ENCODE measurements at regions of chr17 and their contacts with region 1.

Region 1: GRCh38 chr17:68771867-68772515 is 170.8 kb upstream of the FAM20A start:
- DNase-seq: no peak
- H3K4me3 ChIP-seq: no peak overlapping the region
- H3K27ac ChIP-seq: no peak overlapping the region
- H3K4me1 ChIP-seq: no peaks in the 10 kb centered on the region
- H3K27me3 ChIP-seq: no peaks in the 10 kb centered on the region
- CTCF ChIP-seq: peak in 2 of 3 experiments; percentile 57 to 70; a peak in 2 of 4 replicates
- EP300 ChIP-seq: no peak
- POLR2A ChIP-seq: no peak
- RAD21 ChIP-seq: peak; percentile 69 to 79

Region 2: DNA sequence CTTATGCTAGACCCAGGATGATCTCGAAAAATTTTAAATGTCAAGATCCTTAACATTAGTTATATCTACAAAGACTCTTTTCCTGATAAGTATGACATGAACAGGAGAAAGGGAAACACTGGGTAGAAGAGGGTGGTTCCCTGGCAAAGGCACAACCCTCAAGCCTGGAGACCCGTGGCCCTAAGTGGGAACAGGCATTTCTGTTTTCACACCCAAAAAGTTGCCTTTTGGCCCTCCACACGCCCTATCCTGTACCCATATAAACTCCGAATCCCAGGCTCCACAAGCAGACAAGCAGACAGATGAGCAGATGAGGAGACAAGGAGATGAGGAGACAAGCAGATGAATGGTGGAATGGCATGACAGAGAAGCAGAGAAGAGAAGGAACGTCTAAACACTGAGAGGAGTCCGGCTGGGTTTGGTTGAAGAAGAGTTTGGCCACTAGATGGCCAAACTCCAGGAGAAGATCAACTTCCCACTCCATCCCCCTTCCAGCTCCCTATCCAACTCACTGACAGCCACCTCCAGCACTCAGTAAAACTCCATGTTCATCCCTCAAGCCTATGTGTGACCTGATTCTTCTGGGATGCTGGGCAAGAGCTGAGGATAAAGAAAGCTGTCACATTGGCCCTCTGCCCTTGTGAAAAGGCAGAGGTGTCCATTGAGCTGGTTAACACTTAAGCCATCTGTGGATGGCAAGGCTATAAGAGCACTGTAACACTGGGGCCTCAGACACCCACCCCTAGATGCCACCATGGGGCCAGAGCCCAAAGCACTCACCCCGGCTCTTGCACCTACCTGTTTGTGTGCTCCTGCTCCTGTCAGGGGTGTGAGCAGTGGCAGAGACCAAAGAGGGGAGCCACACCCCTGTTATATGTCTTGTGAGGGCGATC is 31.2 kb before region 1 on chr17:
- CTCF ChIA-PET with region 1: no interaction called
- POLR2A ChIA-PET with region 1: no interaction called
- DNase-seq: no peak
- H3K4me3 ChIP-seq: no peak overlapping the region
- H3K27ac ChIP-seq: no peak overlapping the region
- H3K4me1 ChIP-seq: peaks cover 2 to 6% (median 4%) of the 10 kb centered on the region in 4 experiments; a peak in 2 of 7 replicates
- H3K27me3 ChIP-seq: no peaks in the 10 kb centered on the region
- CTCF ChIP-seq: peak in 1 of 3 experiments; percentile 23; a peak in 1 of 4 replicates
- EP300 ChIP-seq: no peak
- POLR2A ChIP-seq: no peak
- RAD21 ChIP-seq: no peak

Region 3: GRCh38 chr17:68759343-68760132 is 12.5 kb before region 1 on chr17:
- CTCF ChIA-PET with region 1: interaction called, 14 read pairs
- POLR2A ChIA-PET with region 1: no interaction called
- DNase-seq: peak; percentile 84 to 85
- H3K4me3 ChIP-seq: peak overlapping the region in 1 of 4 experiments; percentile 34; a peak in 1 of 8 replicates
- H3K27ac ChIP-seq: peak overlapping the region; percentile 82
- H3K4me1 ChIP-seq: peaks cover 2 to 7% (median 5%) of the 10 kb centered on the region in 4 experiments; a peak in 5 of 7 replicates
- H3K27me3 ChIP-seq: no peaks in the 10 kb centered on the region
- CTCF ChIP-seq: peak; percentile 85 to 98 (median 94)
- EP300 ChIP-seq: no peak
- POLR2A ChIP-seq: peak in 1 of 2 experiments; percentile 46; a peak in 1 of 3 replicates
- RAD21 ChIP-seq: peak; percentile 100

Region 4: DNA sequence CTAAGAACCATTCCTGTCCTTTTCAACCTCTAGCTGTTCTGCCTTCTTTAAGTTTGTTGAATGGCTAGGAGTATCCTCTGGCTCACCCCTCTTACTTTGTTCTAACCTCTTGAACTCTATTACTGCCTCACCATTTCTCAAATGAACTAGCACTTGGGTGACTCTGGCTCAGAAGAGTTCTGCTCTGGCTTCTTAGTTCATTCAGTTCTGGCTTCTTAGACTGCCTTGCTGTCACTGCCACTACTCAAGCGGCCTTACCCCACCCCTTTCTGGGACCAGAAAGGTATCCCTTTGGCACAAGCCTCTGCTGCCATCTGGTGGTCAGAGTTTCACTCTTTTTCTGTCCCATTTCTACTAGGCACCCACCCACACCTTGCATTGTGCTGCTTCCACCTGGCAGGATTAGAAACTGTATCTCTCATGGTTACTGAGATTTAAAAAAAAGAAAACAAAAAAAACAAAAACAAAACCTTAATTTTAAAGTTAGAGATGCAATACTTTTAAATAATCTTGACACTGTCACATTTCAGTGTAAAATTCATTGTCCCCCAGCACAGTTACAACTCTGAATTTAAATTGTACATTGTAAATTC is 463.4 kb after region 1 on chr17:
- CTCF ChIA-PET with region 1: interaction called, 37 read pairs
- POLR2A ChIA-PET with region 1: no interaction called
- DNase-seq: peak; percentile 57 to 91
- H3K4me3 ChIP-seq: no peak overlapping the region
- H3K27ac ChIP-seq: no peak overlapping the region
- H3K4me1 ChIP-seq: no peaks in the 10 kb centered on the region
- H3K27me3 ChIP-seq: no peaks in the 10 kb centered on the region
- CTCF ChIP-seq: peak; percentile 53 to 94 (median 83)
- EP300 ChIP-seq: no peak
- POLR2A ChIP-seq: no peak
- RAD21 ChIP-seq: peak; percentile 96 to 97

Region 5: DNA sequence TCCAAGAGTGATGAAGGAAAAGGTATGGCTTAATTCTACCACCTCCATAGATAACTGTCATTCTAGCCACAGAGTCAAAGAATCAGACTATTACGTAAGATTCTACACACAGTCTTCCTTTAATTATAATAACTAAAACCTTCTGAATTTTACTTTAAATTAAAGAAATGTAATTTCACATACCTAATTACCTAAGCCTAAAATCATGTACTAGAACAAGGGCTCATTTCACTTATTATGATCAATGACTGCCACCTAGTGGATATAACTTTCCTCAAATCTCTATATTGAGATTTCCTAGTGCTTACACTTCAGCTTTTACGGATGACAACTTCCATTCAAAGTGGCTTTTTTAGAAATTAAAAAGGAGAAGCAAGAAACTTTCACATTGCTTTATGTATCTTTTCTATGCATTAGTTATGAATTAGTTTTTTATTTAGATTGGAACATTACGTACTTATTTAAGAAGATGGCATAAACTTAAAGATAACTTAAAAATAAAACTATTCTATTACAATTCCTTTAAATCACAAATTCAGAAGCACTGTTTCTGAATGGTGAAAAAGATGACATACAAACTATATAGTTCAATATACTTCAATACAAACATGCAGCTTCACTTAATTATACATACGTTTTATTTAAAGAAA is 474.9 kb after region 1 on chr17:
- CTCF ChIA-PET with region 1: interaction called, 23 read pairs
- POLR2A ChIA-PET with region 1: no interaction called
- DNase-seq: no peak
- H3K4me3 ChIP-seq: no peak overlapping the region
- H3K27ac ChIP-seq: no peak overlapping the region
- H3K4me1 ChIP-seq: no peaks in the 10 kb centered on the region
- H3K27me3 ChIP-seq: no peaks in the 10 kb centered on the region
- CTCF ChIP-seq: peak in 2 of 3 experiments; percentile 34 to 51; a peak in 2 of 4 replicates
- EP300 ChIP-seq: no peak
- POLR2A ChIP-seq: no peak
- RAD21 ChIP-seq: peak; percentile 60 to 66